ENCODE measurements at regions of chr3 and their contacts with region 1.

Region 1: DNA sequence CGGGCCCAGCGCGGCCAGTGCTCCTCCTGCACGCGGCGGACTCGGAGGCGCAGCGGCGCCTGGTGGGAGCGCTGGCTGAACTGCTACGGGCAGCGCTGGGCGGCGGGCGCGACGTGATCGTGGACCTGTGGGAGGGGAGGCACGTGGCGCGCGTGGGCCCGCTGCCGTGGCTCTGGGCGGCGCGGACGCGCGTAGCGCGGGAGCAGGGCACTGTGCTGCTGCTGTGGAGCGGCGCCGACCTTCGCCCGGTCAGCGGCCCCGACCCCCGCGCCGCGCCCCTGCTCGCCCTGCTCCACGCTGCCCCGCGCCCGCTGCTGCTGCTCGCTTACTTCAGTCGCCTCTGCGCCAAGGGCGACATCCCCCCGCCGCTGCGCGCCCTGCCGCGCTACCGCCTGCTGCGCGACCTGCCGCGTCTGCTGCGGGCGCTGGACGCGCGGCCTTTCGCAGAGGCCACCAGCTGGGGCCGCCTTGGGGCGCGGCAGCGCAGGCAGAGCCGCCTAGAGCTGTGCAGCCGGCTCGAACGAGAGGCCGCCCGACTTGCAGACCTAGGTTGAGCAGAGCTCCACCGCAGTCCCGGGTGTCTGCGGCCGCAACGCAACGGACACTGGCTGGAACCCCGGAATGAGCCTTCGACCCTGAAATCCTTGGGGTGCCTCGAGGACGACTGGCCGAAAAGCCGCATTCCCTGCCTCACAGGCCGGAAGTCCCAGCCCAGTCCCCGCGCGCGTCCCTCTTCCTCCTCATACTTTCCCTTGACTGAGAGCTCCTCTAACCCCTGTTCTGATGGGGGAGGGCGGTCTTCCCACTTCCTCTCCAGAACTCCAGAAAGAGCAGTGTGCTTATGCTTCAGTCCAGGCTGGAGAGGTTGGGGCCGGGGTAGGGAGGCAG is 1.4 kb upstream of the IL17RC start:
- DNase-seq: peak in 1 of 2 donors; percentile 93
- H3K4me3 ChIP-seq: peak overlapping the region; percentile 21
- CTCF ChIP-seq: no peak
- POLR2A ChIP-seq: no peak

Region 2: GRCh38 chr3:9623148-9623547 is 292.4 kb before region 1 on chr3:
- intact Hi-C with region 1: no loop called
- DNase-seq: peak in 1 of 2 donors; percentile 15
- H3K4me3 ChIP-seq: no peak overlapping the region
- CTCF ChIP-seq: no peak
- POLR2A ChIP-seq: no peak

Region 3: DNA sequence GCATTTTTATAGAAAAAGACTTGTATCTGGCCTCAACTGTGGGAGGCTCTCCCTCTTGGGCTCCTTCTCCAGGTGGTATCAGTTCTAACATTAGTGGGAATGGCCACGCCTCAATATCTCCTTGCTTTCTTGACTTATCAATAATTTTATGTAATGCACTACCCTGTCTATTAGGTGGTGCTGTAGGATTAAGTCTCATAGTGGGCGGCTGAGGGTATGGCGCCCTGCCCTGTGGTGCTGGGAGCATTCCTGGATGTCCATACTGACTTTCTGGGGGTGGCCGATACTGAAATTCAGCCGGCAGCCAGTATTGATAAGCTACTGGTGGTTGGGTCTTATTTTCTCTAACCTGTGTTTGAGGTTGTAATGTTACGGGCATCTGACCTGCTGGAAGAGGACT is 62.9 kb before region 1 on chr3:
- intact Hi-C with region 1: loop called (anchors 10 kb)
- DNase-seq: no peak
- H3K4me3 ChIP-seq: no peak overlapping the region
- CTCF ChIP-seq: no peak
- POLR2A ChIP-seq: no peak

Region 4: GRCh38 chr3:10968401-10968800 is 1052.9 kb after region 1 on chr3:
- intact Hi-C with region 1: no loop called
- DNase-seq: no peak
- H3K4me3 ChIP-seq: no peak overlapping the region
- CTCF ChIP-seq: no peak
- POLR2A ChIP-seq: no peak